ENCODE measurements at regions of chr5 and their contacts with region 1.

Region 1: GRCh38 chr5:79020861-79021561 is 35.9 kb upstream of the ARSB start:
- DNase-seq: peak; percentile 70
- ATAC-seq: peak; percentile 87
- H3K4me3 ChIP-seq: peak overlapping the region; percentile 51
- H3K27ac ChIP-seq: no peak overlapping the region
- H3K4me1 ChIP-seq: no peaks in the 10 kb centered on the region
- H3K27me3 ChIP-seq: no peaks in the 10 kb centered on the region
- CTCF ChIP-seq: peak; percentile 80

Region 2: DNA sequence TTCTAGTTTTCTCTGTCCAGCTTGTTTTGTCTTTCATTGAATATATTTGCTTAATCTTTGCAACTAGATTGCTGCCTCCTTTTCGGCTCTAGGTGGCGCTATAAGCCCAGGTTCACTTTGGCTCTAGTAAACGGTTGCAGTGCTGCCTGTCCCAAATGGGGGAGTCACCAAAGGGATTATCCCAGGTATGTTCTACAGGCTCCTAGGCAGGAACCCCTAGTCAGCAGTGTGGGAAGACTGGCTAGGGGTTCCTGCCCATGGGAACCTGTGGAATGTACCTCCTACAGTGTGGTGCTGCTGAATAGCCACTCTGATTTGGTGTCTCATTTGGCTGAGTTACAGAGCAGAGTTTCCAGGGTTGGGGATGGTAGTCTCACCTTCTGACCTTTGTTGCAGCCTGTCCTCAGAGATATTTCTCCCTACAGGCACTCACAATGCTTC is 121.1 kb before region 1 on chr5:
- CTCF ChIA-PET with region 1: no interaction called
- POLR2A ChIA-PET with region 1: no interaction called
- intact Hi-C with region 1: no loop called
- DNase-seq: peak; percentile 56
- ATAC-seq: peak; percentile 46; the same call in 1 of the 2 replicates
- H3K4me3 ChIP-seq: no peak overlapping the region
- H3K27ac ChIP-seq: no peak overlapping the region
- H3K4me1 ChIP-seq: no peaks in the 10 kb centered on the region
- H3K27me3 ChIP-seq: no peaks in the 10 kb centered on the region
- CTCF ChIP-seq: peak; percentile 79

Region 3: GRCh38 chr5:79122973-79123372 is 102.0 kb after region 1 on chr5:
- CTCF ChIA-PET with region 1: no interaction called
- POLR2A ChIA-PET with region 1: no interaction called
- intact Hi-C with region 1: loop called (anchors 5 kb)
- DNase-seq: no peak
- ATAC-seq: no peak
- H3K4me3 ChIP-seq: no peak overlapping the region
- H3K27ac ChIP-seq: no peak overlapping the region
- H3K4me1 ChIP-seq: no peaks in the 10 kb centered on the region
- H3K27me3 ChIP-seq: no peaks in the 10 kb centered on the region
- CTCF ChIP-seq: no peak

Region 4: DNA sequence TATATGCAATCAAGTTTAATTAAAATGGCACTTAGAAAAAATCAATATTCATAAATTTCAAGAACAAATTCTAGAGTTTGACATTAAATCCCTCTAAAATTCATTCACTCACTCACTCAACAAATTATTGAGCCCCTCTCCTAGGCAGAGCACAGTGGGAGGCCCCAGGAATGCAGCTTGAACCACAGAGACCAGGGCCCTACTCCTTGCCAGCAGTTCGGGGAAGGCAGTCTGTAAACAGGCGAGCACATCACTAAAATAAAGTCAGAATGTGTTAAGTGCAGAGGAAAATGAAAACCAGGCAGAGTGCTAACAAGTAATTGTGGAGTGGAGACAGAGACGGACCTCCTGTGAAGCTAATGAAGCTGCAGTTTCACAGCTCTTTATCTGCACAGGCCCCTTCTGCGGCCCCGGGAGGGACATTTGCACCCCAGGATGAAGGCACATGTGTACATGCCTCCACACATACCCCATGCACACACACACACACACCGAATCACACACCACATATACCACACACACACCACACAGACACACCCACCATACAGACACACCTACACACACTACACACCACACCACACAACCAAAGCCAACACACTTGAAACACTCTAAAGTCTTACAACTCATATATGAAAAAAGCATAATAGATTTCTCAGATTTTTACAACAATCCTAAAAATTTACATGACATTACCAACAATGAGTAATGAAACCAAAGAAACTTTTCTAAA is 131.1 kb after region 1 on chr5:
- CTCF ChIA-PET with region 1: no interaction called
- POLR2A ChIA-PET with region 1: no interaction called
- intact Hi-C with region 1: no loop called
- DNase-seq: no peak
- ATAC-seq: no peak
- H3K4me3 ChIP-seq: no peak overlapping the region
- H3K27ac ChIP-seq: no peak overlapping the region
- H3K4me1 ChIP-seq: peaks cover 1% of the 10 kb centered on the region; the same call in 1 of the 2 replicates
- H3K27me3 ChIP-seq: no peaks in the 10 kb centered on the region
- CTCF ChIP-seq: no peak

Region 5: GRCh38 chr5:79200573-79201183 is 179.7 kb after region 1 on chr5:
- CTCF ChIA-PET with region 1: interaction called, 4 read pairs
- POLR2A ChIA-PET with region 1: no interaction called
- intact Hi-C with region 1: loop called (anchors 10 kb)
- DNase-seq: peak; percentile 52
- ATAC-seq: peak; percentile 68
- H3K4me3 ChIP-seq: no peak overlapping the region
- H3K27ac ChIP-seq: no peak overlapping the region
- H3K4me1 ChIP-seq: peaks cover 13% of the 10 kb centered on the region
- H3K27me3 ChIP-seq: no peaks in the 10 kb centered on the region
- CTCF ChIP-seq: peak; percentile 72

Region 6: DNA sequence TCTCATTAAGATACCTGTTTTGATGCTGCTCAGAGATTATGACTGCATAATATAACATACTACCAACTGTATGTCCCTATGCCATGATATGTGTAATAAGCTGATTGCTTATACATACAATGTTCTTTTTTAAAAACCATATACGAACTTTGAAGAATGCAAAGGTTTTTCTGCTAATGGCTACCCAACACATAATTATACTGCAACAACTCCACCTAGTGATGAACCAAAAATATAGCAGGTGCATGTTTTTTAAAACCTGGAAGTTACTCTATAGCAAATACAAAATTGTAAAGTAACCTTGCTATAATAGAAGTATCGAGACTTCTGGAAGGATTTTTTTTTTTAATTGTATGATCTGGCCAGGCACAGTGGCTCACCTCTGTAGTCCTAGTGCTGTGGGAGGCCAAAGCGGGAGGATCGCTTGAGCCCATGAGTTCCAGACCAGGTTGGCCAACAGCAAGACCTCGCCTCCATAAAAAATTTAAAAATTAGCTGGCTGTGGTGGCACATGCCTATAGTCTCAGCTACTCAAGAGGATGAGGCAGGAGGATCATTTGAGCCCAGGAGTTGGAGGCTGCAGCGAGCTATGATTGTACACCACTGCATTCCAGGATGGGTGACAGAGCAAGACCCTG is 443.8 kb after region 1 on chr5:
- CTCF ChIA-PET with region 1: no interaction called
- POLR2A ChIA-PET with region 1: no interaction called
- intact Hi-C with region 1: loop called (anchors 2 kb)
- DNase-seq: peak; percentile 52
- ATAC-seq: peak; percentile 55
- H3K4me3 ChIP-seq: peak overlapping the region; percentile 40; the same call in 1 of the 2 replicates
- H3K27ac ChIP-seq: no peak overlapping the region
- H3K4me1 ChIP-seq: no peaks in the 10 kb centered on the region
- H3K27me3 ChIP-seq: no peaks in the 10 kb centered on the region
- CTCF ChIP-seq: peak; percentile 80

Region 7: DNA sequence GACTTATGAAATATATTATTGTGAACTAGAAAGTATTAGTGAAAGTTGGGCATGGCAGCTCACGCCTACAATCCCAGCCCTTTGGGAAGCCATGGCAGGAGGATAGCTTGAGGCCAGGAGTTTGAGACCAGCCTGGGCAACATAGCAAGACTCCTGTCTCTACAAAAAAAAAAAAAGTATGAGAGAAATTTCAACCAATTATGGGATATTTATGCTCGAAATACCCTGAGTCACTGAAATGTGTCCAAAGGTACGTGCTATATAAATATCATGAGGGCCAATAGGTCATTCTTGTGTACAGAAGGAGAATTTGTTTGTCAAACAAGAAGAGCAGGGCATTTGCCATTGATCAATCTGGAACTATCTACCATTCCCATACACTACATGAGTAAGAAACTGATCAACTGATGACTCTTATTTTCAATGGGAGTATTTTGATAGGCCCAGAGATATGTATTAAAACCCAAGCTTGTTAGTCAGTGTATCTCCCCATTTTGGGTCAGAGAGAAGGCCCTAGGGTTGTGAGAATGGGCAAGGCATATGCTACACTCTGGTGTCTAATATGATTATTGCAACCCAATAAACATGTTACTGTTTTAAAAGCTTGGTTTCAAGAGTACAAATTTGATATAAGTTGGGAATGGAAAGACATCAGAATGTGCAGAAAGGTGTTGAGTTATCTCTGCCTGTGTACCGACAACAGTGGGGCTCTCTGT is 514.6 kb after region 1 on chr5:
- CTCF ChIA-PET with region 1: interaction called, 3 read pairs
- POLR2A ChIA-PET with region 1: no interaction called
- intact Hi-C with region 1: loop called (anchors 5 kb)
- DNase-seq: peak; percentile 32
- ATAC-seq: peak; percentile 45
- H3K4me3 ChIP-seq: no peak overlapping the region
- H3K27ac ChIP-seq: no peak overlapping the region
- H3K4me1 ChIP-seq: no peaks in the 10 kb centered on the region
- H3K27me3 ChIP-seq: no peaks in the 10 kb centered on the region
- CTCF ChIP-seq: peak; percentile 41; the same call in 1 of the 2 replicates

Region 8: GRCh38 chr5:79689541-79690466 is 668.8 kb after region 1 on chr5 and contains the start of gene CMYA5:
- CTCF ChIA-PET with region 1: no interaction called
- POLR2A ChIA-PET with region 1: no interaction called
- intact Hi-C with region 1: no loop called
- DNase-seq: no peak
- ATAC-seq: peak; percentile 29; the same call in 1 of the 2 replicates
- H3K4me3 ChIP-seq: no peak within 1 kb of the TSS
- H3K27ac ChIP-seq: no peak within 1 kb of the TSS
- H3K4me1 ChIP-seq: no peaks in the 10 kb centered on the region
- H3K27me3 ChIP-seq: no peaks in the 10 kb centered on the region
- CTCF ChIP-seq: no peak
- total RNA-seq, gene CMYA5: under 0.01 and 0.15 TPM in 2 replicates

Region 9: GRCh38 chr5:79857714-79858409 is 836.9 kb after region 1 on chr5:
- CTCF ChIA-PET with region 1: no interaction called
- POLR2A ChIA-PET with region 1: no interaction called
- intact Hi-C with region 1: loop called (anchors 5 kb)
- DNase-seq: peak; percentile 77
- ATAC-seq: no peak; the same call in 1 of the 2 replicates
- H3K4me3 ChIP-seq: no peak overlapping the region
- H3K27ac ChIP-seq: no peak overlapping the region
- H3K4me1 ChIP-seq: peaks cover 4% of the 10 kb centered on the region; the same call in 1 of the 2 replicates
- H3K27me3 ChIP-seq: no peaks in the 10 kb centered on the region
- CTCF ChIP-seq: peak; percentile 91